Pancreas (tissue), 10 donors: ENCODE measurements at regions of chr17 and their contacts with region 1.

Region 1: GRCh38 chr17:17356149-17356930 is 53.2 kb downstream of the NT5M start:
- DNase-seq: peak; percentile 56 to 87 (median 74)
- ATAC-seq: peak; percentile 90 to 98 (median 97)
- H3K4me3 ChIP-seq: no peak overlapping the region
- H3K27ac ChIP-seq: no peak overlapping the region
- H3K4me1 ChIP-seq: no peaks in the 10 kb centered on the region
- H3K27me3 ChIP-seq: peaks cover 0 to 3% (median 0%) of the 10 kb centered on the region in 4 donors
- CTCF ChIP-seq: peak; percentile 95 to 98 (median 97)

Region 2: GRCh38 chr17:17523001-17523730 is 166.8 kb after region 1 on chr17:
- intact Hi-C with region 1: no loop called
- DNase-seq: peak; percentile 75 to 87 (median 83)
- ATAC-seq: peak; percentile 87 to 94 (median 90)
- H3K4me3 ChIP-seq: no peak overlapping the region
- H3K27ac ChIP-seq: peak overlapping the region; percentile 25 to 71 (median 51)
- H3K4me1 ChIP-seq: peaks cover 6 to 20% (median 12%) of the 10 kb centered on the region in 3 donors
- H3K27me3 ChIP-seq: no peaks in the 10 kb centered on the region
- CTCF ChIP-seq: no peak

Region 3: GRCh38 chr17:17568749-17569195 is 212.4 kb after region 1 on chr17:
- intact Hi-C with region 1: loop called (anchors 1 to 10 kb)
- DNase-seq: peak; percentile 82 to 99 (median 90)
- ATAC-seq: peak; percentile 75 to 82 (median 78)
- H3K4me3 ChIP-seq: no peak overlapping the region
- H3K27ac ChIP-seq: peak overlapping the region in 3 of 4 donors; percentile 10 to 55 (median 33)
- H3K4me1 ChIP-seq: peaks cover 30 to 42% (median 30%) of the 10 kb centered on the region in 3 donors
- H3K27me3 ChIP-seq: no peaks in the 10 kb centered on the region
- CTCF ChIP-seq: peak; percentile 65 to 85 (median 79)